MCF 10A (cell line): ENCODE measurements at regions of chr11 and their contacts with region 1.

Region 1: DNA sequence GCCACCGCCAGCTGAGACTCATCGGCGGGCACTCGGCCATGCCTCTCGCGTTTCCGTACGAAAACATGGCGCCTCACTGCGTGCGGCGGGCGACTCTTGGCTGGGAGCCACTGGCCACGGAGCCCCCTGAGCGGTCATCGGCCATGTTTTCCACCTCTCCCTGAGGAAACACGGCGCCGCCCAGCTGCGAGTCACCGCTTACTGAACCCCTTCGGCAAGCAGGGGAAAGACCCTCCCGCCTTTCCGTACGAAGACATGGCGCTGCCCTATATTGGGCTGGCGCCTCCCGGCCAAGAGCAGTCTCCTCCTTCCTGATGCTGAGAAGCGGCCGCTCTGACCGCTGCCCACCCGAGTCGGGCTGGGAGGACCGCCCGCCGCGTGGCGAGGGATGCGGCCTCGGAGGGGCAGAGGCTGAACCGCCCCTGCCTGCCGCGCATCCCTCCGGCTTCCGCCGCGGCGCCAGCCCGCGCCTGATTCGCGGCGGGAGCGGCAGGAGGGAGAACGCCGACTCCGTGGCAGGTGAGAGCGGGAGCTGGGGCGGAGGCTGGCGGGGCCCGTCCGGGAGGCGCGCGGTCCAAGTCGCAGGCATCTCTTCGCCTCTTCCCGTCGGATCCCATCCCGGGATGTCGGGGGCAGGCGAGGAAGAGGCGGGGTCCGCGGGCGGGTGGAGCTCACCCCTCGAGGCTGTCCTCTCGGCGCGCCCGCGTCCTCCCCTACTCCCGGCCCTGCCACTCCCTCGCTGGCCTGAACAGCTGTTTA is at the start of gene TCP11L1:
- DNase-seq: peak; percentile 68
- H3K4me3 Mint-ChIP-seq: peak within 1 kb of the TSS; percentile 85
- H3K27ac Mint-ChIP-seq: peak within 1 kb of the TSS; percentile 97
- H3K4me1 Mint-ChIP-seq: peaks cover 16% of the 10 kb centered on the region
- H3K27me3 Mint-ChIP-seq: no peaks in the 10 kb centered on the region
- CTCF ChIP-seq: no peak
- total RNA-seq, gene TCP11L1: 25.8 and 26.9 TPM in 2 replicates

Region 2: DNA sequence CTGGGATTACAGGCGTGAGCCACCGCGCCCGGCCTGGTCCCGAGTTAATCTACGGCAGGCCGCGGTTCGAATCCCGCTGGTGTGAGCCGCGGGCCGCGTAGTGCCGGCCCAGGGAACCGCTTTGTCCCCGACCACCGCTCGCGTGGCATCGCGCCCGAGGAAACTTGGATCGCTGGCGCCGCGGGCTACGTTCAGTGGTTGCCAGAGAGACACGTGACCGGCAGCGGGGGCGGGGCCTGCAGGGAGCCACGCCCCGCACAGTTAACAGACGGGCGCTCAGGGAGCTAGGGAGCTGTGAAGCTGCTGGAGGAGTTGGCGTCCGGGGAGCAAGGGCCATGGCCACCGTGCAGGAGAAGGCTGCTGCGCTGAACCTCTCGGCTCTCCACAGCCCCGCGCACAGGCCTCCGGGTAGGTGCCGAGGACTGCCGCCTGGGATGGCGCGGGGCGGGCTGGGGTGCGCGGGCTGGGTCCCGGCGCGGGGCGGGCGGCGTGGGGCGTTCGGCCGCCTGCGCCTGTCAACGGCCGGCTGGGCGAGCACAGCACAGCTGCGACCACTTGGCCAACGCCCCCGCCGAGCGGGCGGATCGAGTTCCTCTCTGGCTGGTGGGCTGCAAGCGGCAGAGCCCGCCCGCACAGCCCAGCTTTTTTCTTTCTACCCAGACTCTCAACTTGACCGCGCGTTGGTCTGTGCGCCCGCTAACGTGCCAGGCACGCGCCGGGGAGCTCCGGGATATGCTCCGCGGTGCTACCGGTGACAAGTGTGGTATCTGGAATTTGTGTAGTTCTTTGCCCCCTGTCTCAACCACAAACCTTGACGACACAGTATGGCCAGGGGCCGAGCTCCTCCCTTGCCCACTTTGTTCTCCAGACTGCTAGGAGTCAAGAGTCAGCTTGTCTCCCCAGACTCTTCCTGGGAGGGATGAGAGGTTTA is 23.6 kb before region 1 on chr11 and contains the start of gene DEPDC7:
- CTCF ChIA-PET with region 1: interaction called, 3 read pairs
- POLR2A ChIA-PET with region 1: interaction called, 20 read pairs
- intact Hi-C with region 1: no loop called
- DNase-seq: peak; percentile 72
- H3K4me3 Mint-ChIP-seq: peak within 1 kb of the TSS; percentile 78
- H3K27ac Mint-ChIP-seq: peak within 1 kb of the TSS; percentile 24
- H3K4me1 Mint-ChIP-seq: no peaks in the 10 kb centered on the region
- H3K27me3 Mint-ChIP-seq: no peaks in the 10 kb centered on the region
- CTCF ChIP-seq: no peak
- total RNA-seq, gene DEPDC7: 2.2 and 3.6 TPM in 2 replicates

Region 3: GRCh38 chr11:33021937-33022336 is 17.5 kb before region 1 on chr11:
- CTCF ChIA-PET with region 1: interaction called, 3 read pairs
- POLR2A ChIA-PET with region 1: interaction called, 44 read pairs
- intact Hi-C with region 1: no loop called
- DNase-seq: no peak
- H3K4me3 Mint-ChIP-seq: no peak overlapping the region
- H3K27ac Mint-ChIP-seq: no peak overlapping the region
- H3K4me1 Mint-ChIP-seq: peaks cover 5% of the 10 kb centered on the region
- H3K27me3 Mint-ChIP-seq: no peaks in the 10 kb centered on the region
- CTCF ChIP-seq: no peak

Region 4: DNA sequence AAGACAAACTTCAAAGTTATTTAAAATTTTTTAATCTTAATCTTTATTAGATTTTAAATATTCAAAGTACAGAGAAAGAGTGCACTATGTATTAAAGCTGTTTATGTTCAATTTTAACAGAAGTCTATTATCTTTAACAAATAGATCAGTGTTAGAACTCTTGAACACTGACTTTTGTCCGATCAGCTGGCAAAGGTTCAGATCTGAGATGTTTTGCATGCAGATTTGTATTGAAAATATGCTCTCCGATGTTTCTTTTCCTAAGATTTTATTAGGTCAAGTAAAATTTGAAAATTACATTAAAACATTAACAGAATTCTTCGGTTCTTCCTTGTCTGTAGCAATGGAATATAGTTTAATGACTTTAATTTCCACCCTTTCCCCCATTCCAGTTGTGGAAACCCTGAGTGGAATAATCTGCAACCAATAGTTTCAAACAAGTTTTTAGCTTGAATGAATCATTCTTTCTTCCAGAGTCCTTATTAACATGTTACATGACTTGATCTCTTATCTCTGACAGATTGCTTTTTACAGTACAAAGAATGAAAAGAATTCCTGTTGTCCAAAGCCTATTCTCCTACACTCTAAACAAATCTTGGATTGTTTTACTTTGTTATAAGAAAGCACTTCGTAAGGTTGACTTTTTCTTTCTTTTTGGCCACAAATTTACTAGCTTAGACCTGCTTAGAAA is 11.5 kb before region 1 on chr11:
- CTCF ChIA-PET with region 1: interaction called, 6 read pairs
- POLR2A ChIA-PET with region 1: interaction called, 44 read pairs
- intact Hi-C with region 1: no loop called
- DNase-seq: no peak
- H3K4me3 Mint-ChIP-seq: no peak overlapping the region
- H3K27ac Mint-ChIP-seq: no peak overlapping the region
- H3K4me1 Mint-ChIP-seq: peaks cover 5% of the 10 kb centered on the region
- H3K27me3 Mint-ChIP-seq: no peaks in the 10 kb centered on the region
- CTCF ChIP-seq: no peak

Region 5: GRCh38 chr11:33060271-33060670 is 20.8 kb after region 1 on chr11:
- CTCF ChIA-PET with region 1: interaction called, 103 read pairs
- POLR2A ChIA-PET with region 1: interaction called, 99 read pairs
- intact Hi-C with region 1: loop called (anchors 2 kb)
- DNase-seq: no peak
- H3K4me3 Mint-ChIP-seq: no peak overlapping the region
- H3K27ac Mint-ChIP-seq: peak overlapping the region; percentile 97
- H3K4me1 Mint-ChIP-seq: peaks cover 56% of the 10 kb centered on the region
- H3K27me3 Mint-ChIP-seq: no peaks in the 10 kb centered on the region
- CTCF ChIP-seq: no peak